ENCODE measurements at regions of chr6 and their contacts with region 1.

Region 1: GRCh38 chr6:31842056-31842455 is 14.5 kb downstream of the HSPA1B start:
- DNase-seq: no peak
- H3K4me3 ChIP-seq: no peak overlapping the region
- H3K27me3 ChIP-seq: no peaks in the 10 kb centered on the region
- CTCF ChIP-seq: no peak

Region 2: DNA sequence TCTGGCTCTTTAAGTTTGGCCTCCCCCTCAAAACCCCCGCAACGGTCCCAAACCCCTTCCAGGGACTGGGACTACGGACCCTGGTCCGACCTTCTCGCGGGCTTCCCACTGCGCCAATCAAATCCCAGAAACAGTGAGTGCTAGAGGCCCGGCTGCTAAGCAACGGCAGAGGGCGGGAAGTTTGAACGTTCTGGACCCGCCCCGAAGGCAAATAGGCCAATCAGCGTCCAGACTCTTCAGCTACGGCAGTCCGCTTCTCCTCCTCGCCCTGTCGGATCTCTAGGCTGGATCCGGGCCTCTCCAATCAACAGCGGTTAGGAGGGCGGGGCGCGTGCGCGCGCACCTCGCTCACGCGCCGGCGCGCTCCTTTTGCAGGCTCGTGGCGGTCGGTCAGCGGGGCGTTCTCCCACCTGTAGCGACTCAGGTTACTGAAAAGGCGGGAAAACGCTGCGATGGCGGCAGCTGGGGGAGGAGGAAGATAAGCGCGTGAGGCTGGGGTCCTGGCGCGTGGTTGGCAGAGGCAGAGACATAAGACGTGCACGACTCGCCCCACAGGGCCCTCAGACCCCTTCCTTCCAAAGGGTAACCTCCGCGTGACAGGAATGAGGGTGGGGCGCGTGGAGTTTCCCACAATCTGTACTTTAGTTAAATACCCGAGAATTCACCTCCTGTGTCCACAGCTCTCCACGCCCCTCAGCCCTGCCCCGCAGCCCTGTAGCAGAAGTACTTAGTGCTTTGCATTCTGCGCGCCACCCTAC is 102.2 kb before region 1 on chr6 and contains the start of gene MSH5:
- CTCF ChIA-PET with region 1: no interaction called
- POLR2A ChIA-PET with region 1: interaction called, 12 read pairs
- DNase-seq: peak; percentile 98
- H3K4me3 ChIP-seq: peak within 1 kb of the TSS; percentile 75
- H3K27me3 ChIP-seq: no peaks in the 10 kb centered on the region
- CTCF ChIP-seq: no peak
- polyA plus RNA-seq, gene MSH5: 9.2 and 10.7 TPM in 2 replicates

Measured in BJ (cell line).